ENCODE measurements at regions of chr10 and their contacts with region 1.

Region 1: DNA sequence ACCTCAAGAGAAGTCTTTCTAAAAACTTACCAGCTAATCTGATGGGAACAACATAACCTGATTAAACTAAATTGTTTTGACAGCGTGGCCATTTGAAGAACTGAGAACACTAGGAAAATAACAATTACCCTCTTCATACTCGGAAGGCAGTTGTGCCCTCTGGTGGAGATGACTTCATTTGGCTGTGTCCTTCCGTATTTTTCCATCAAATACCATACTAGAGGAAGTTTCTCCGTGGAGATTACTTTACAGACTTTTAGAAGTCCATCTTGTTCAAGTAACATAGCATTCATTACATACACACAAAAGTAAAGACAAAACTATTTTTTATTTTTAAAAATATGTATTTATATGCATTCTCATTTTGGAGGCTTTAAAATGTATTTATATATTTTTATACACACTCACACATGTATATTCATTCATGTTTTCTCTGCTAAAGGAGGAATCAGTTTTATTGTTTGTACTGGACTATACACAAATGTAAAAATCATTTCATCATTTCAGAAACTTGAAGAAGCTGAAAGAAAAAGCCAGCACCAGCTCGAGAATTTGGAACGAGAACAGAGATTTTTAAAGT is 25.2 kb downstream of the SMNDC1 start:
- DNase-seq: peak; percentile 36 to 63
- ATAC-seq: peak; percentile 85

Region 2: GRCh38 chr10:110225756-110226542 is 53.5 kb before region 1 on chr10:
- intact Hi-C with region 1: loop called in 1 of 2 experiments (anchors 10 kb)
- DNase-seq: peak; percentile 92 to 93
- ATAC-seq: peak; percentile 70

Measured in left colon (tissue), 2 donors.